ENCODE measurements at regions of chr1 and their contacts with region 1.

Region 1: GRCh38 chr1:55375617-55376258 is 160.6 kb upstream of the USP24 start:
- DNase-seq: peak; percentile 68
- CTCF ChIP-seq: peak; percentile 78

Region 2: DNA sequence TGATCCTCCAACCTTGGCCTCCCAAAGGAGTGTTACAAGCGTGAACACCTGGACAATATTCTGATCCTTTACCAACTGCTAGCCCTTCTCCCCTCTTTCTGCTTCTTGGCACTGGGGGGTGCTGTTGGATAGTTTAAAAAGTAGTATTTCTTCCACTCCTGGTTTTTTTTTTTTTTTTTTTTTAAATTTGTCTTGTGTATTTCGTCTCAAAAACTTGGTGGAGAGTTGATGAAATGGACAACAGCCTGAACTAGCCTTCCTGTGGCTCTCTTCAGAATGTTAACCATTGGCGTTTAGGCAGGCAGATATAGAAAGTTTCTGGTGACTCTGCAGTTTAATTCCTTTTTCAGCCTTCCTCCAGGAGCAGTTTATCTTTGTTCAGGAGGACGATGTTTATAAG is 90.9 kb before region 1 on chr1:
- CTCF ChIA-PET with region 1: interaction called, 12 read pairs
- POLR2A ChIA-PET with region 1: no interaction called
- DNase-seq: no peak
- CTCF ChIP-seq: peak; percentile 60

Region 3: GRCh38 chr1:55353707-55354620 is 21.8 kb before region 1 on chr1:
- CTCF ChIA-PET with region 1: interaction called, 16 read pairs
- POLR2A ChIA-PET with region 1: no interaction called
- DNase-seq: no peak
- CTCF ChIP-seq: no peak

Region 4: DNA sequence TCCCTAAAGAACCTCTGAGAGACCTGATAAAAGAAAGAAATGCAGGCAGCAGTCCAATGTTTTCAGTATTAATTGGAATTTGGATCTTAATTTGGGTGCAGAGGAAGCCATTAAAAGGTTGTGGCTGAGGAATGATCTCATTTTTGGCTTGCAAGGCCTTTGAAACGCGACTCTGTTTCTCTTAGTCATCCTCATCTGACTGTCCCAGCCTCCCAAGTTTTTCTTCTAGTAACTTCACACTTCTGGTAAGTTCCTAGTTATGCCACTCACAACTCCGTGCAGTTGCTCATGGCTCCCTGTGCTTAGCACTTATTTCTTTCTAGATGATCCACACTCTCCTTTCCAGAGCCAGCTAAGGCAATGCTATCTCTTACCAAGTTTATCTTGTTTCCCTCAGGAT is 13.2 kb before region 1 on chr1:
- CTCF ChIA-PET with region 1: interaction called, 35 read pairs
- POLR2A ChIA-PET with region 1: no interaction called
- DNase-seq: no peak
- CTCF ChIP-seq: no peak

Region 5: GRCh38 chr1:55519937-55520683 is 144.4 kb after region 1 on chr1:
- CTCF ChIA-PET with region 1: no interaction called
- POLR2A ChIA-PET with region 1: no interaction called
- DNase-seq: no peak
- CTCF ChIP-seq: no peak

Measured in GM10248 (cell line).